ENCODE measurements at regions of chr2 and their contacts with region 1.

Region 1: DNA sequence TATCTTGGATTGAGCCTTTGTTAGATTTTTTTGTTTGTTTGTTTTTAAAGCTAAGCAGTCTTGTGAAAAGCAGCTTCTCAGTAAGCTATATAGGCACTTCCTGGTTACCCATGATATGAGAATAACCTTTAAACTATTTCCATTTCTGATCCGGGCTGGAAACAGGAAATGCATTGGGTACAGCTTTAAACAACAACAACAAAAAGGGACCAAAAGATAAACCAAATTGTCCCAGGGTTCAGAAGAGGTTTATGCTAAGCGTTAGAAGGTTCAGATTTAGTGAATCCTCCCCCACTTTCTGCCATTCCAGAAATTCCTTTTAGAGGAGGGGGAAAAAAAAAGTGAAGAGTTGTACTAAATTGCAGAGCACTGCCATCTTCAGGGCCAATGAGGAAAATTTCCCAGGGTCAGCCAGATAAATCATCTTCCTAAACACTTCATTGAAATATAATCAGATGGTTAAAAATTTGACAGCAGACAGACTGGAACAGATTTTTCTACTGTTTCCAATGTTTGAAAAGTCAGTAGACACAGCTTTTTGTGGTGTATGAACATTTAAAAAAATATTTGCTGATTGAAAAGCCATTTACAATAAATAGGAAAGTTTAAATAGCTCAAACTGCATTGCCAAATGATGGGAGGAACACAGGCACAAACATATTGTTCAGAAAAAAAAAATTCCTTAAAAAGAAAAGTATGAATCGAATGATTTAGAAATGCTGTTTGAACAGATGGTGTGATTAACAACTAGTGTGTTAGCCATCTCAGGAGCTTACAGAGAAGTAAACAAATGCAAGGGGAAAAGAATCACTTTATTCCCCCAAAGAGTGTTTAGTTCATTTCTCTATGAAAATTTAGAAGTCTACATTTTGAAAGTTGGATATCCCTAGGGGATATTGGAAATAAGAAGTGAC is 189.9 kb upstream of the TANK start:
- DNase-seq: no peak
- ATAC-seq: peak; percentile 78 to 81

Region 2: DNA sequence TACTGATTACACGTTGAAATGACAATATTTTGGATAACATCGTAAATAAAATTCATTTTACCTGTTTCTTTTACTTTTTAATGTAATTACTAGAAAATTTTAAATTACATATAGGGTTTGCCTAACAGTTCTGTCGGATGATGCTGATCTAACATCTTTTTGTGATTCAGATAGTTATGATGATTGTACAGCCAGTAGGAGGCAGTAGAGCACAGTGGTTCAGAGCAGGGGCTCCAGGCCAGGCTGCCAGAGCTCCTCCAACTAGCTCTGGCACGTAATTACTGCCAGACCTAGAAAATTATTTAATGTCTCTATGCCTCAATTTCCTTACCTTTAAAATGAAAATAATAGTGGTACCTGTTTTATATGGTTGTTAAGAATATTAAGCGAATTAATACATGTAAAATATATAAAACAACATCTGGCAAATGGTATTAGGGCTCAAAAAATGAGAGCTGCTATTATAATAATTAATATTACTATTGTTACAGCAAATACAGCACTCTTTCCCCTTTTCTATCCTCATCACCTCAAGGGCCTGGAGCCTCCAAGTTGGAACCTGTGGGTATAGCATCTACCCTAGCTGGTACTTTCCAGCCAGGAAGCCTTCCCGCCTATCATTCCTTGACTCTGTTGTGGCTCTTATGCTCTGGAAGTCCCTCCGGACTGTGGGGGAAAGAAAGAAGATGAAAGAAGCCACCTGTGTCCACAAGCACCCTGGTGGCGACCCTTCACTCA is 860.2 kb before region 1 on chr2:
- intact Hi-C with region 1: loop called in 1 of 2 experiments (anchors 10 kb)
- DNase-seq: peak; percentile 60
- ATAC-seq: peak; percentile 91 to 94

Region 3: GRCh38 chr2:160294339-160294803 is 675.9 kb before region 1 on chr2:
- intact Hi-C with region 1: loop called in 1 of 2 experiments (anchors 10 kb)
- DNase-seq: peak; percentile 82
- ATAC-seq: peak; percentile 46 to 85

Region 4: GRCh38 chr2:160332318-160332717 is 638.0 kb before region 1 on chr2:
- intact Hi-C with region 1: loop called in 1 of 2 experiments (anchors 5 kb)
- DNase-seq: no peak
- ATAC-seq: peak; percentile 69 to 70

Region 5: GRCh38 chr2:160406591-160407392 is 563.5 kb before region 1 on chr2:
- intact Hi-C with region 1: loop called in 1 of 2 experiments (anchors 5 kb)
- DNase-seq: peak; percentile 59
- ATAC-seq: peak; percentile 24 to 54

Measured in left cardiac atrium (tissue), 4 donors.